ENCODE measurements at regions of chr6 and their contacts with region 1.

Region 1: DNA sequence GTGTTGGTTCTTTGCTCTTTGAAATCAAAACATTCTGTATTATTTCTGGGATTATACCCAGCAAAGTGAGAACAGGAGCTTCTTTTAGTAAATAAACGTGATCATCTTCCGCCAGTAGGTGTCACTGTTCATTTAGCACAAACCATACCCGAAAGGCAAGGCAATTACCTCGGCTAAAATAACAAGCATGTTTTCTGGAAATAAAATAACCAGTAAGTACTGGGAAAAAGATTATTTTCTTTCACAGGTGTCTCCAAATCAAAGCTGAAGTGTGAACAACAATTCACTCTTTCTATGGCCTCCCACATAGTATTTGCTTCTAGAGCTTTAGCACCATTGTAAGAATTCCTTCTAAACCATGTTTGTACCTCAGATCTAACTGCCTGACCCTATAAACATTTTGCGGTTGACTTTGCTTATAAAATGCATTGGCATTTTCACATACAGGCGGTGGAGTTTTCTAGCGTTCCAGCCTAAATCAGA is 144.6 kb upstream of the AGPAT4 start:
- DNase-seq: peak; percentile 59
- H3K4me3 ChIP-seq: no peak overlapping the region
- CTCF ChIP-seq: peak; percentile 55

Region 2: DNA sequence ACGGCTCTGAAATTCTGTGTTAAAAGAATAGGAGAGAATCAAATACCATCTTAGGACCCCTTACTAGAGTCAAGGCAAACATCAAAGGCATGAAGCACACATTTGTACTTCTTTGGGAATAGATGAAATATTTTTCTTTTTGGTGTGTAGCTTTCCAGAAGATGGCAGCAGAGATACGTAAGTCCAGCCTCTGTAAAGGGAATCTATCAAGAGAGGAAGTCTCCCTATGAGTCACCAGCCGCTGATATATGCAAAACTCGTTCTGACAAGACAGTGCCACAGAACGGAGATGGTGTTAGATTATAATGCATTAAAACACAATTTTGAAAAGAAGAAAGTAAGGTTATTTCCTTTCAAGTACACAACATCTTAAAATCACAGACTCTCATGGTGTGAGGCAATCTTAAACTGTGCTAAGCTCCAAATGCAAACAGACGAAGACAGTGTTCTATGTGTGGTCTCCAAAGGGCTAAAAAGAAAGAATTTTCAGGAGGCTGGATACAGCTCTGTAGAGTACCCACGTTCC is 24.6 kb before region 1 on chr6:
- CTCF ChIA-PET with region 1: interaction called, 28 read pairs
- POLR2A ChIA-PET with region 1: no interaction called
- DNase-seq: no peak
- H3K4me3 ChIP-seq: peak overlapping the region; percentile 23
- CTCF ChIP-seq: peak; percentile 55

Region 3: DNA sequence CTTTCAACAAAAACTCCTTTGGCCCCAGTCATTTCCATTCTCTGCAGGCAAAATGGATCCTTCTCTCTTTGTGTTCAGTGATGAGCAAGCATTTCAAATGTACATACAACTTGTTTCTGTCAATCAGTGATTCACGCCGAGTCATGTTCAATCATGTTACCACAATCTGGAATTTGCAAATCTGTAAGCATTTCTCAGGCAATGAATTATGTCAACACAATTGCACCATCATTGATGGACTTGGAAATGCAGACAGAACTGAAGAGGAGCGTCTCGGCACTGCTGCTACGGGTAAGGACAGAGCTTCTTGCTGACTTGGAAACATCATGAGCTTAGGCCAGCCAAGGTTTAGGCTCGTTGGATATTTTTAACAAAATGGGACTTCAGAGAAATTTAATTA is 11.9 kb before region 1 on chr6:
- CTCF ChIA-PET with region 1: interaction called, 45 read pairs
- POLR2A ChIA-PET with region 1: interaction called, 7 read pairs
- DNase-seq: peak; percentile 44
- H3K4me3 ChIP-seq: no peak overlapping the region
- CTCF ChIP-seq: no peak

Region 4: DNA sequence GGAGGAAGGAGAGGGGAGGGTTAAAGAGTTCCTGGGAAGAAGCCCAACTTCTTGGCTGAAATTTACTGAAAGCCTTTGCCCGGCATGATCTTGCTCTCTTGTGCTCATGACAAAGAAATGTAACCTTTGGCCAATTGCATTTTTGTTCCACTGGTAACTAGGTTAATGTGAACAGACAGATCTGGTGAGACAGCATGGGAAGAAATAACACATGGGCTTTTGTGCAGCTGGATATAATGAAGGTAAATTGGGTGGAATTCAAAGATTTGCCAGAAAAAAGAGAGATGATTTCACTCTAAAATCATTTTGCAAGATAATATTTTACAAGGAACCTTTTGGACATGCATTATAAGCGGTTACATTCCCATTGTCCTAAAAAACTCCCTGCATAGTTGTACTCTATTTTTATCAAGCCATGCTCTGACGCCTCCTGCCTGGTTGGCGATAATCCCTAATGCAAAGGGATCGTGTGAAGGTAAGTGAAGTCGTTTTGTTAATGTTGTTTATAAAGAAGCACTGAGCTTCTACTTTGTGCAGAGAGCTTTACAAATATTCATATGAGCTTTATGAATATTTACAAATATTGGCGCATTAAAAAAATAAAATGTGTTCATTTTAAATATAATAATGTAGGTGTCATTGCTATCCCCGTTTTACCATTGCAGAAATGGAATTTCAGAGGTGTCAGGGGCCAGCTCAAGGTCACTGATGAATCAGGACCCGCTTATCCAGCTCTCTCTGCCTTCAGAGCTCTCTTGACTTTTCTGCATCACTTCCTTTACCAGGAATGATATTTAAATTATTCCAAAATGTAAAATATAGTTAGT is 16.6 kb after region 1 on chr6:
- CTCF ChIA-PET with region 1: interaction called, 34 read pairs
- POLR2A ChIA-PET with region 1: no interaction called
- DNase-seq: peak; percentile 93
- H3K4me3 ChIP-seq: no peak overlapping the region
- CTCF ChIP-seq: no peak

Region 5: GRCh38 chr6:161459008-161459615 is 40.6 kb after region 1 on chr6:
- CTCF ChIA-PET with region 1: interaction called, 18 read pairs
- POLR2A ChIA-PET with region 1: no interaction called
- DNase-seq: no peak
- H3K4me3 ChIP-seq: no peak overlapping the region
- CTCF ChIP-seq: no peak

Region 6: DNA sequence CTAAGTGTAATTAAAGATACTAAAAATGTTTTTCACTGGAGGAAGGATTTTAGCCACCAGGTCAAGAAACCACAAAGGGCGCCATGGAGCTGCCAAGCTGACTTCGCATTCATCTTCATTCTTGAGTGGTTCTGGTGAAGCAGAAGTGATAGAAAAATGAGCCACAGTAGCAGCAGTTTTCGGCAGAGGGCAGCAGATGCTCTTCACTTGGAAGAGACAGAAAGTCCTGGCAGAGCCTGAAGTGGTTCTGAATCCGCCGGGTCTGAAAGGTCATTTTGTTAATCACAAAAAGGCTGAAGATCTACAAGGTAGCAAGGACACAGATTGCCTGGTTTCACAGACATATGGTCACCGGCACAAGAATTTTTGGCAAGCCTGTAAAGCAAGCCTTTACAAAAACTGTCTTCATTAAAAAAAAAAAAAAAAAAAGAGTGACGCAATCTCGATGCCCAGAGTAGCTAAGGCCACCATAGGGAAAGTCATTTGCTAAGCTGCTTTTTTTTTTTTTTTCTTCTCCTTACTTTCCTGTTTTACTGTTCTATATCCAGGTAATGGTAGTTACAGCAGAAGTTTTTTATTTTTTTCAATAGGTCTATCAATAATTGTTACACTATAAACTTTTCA is 200.4 kb after region 1 on chr6:
- CTCF ChIA-PET with region 1: interaction called, 11 read pairs
- POLR2A ChIA-PET with region 1: no interaction called
- DNase-seq: peak; percentile 4
- H3K4me3 ChIP-seq: no peak overlapping the region; the same call in 1 of the 2 replicates
- CTCF ChIP-seq: peak; percentile 61

Region 7: GRCh38 chr6:161748535-161749416 is 330.3 kb after region 1 on chr6:
- CTCF ChIA-PET with region 1: no interaction called
- POLR2A ChIA-PET with region 1: no interaction called
- DNase-seq: no peak
- H3K4me3 ChIP-seq: no peak overlapping the region
- CTCF ChIP-seq: no peak

Measured in AG04449 (cell line).